ENCODE measurements at regions of chr12 and their contacts with region 1.

Region 1: DNA sequence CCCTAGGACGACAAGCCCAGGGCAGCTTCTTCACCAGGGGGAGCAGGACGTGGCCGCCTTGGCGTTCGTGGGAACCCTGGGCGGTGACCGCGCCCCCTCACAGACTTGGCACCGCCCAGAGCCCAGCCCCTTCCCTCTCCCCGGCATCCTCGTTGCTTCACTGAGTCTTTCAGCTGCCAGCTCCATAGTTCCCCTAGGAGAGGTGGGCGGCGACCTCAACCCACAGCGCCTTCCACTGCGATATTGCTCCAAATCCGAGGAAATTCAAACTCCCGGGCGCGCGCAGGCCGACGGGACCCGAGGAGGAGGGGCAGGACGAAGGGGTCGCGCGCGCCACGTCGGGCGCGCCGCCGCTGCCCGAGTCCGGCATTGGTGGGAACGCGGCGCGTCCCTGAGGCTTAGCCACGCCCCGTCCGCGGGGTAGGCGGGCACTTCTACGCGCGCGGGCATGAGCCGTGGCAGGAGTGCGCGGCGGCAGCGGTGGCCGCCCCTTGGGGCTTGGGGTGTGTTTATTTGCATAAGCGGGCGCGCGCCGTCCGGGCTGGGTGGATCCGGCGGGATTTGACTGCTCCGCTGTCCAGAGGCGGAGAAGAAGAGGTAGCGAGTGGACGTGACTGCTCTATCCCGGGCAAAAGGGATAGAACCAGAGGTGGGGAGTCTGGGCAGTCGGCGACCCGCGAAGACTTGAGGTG is at the starts of genes APAF1 and IKBIP:
- DNase-seq: peak; percentile 84 to 98
- H3K4me3 ChIP-seq: peak within 1 kb of the TSS; percentile 85
- H3K27ac ChIP-seq: peak within 1 kb of the TSS; percentile 29
- H3K4me1 ChIP-seq: peaks cover 7% of the 10 kb centered on the region; the same call in 1 of the 2 replicates
- H3K27me3 ChIP-seq: no peaks in the 10 kb centered on the region
- CTCF ChIP-seq: no peak
- total RNA-seq, gene APAF1: 12.8 and 19.1 TPM in 2 replicates
- total RNA-seq, gene IKBIP: 6.6 and 7.2 TPM in 2 replicates

Region 2: GRCh38 chr12:98379106-98379505 is 265.8 kb before region 1 on chr12:
- CTCF ChIA-PET with region 1: no interaction called
- POLR2A ChIA-PET with region 1: no interaction called
- intact Hi-C with region 1: no loop called
- DNase-seq: no peak
- H3K4me3 ChIP-seq: no peak overlapping the region
- H3K27ac ChIP-seq: no peak overlapping the region
- H3K4me1 ChIP-seq: no peaks in the 10 kb centered on the region
- H3K27me3 ChIP-seq: peaks cover 62% of the 10 kb centered on the region
- CTCF ChIP-seq: no peak

Region 3: GRCh38 chr12:98424726-98425401 is 220.0 kb before region 1 on chr12:
- CTCF ChIA-PET with region 1: no interaction called
- POLR2A ChIA-PET with region 1: no interaction called
- intact Hi-C with region 1: loop called (anchors 2 kb)
- DNase-seq: peak; percentile 83 to 91
- H3K4me3 ChIP-seq: no peak overlapping the region
- H3K27ac ChIP-seq: 0 out of 2 replicates have a peak overlapping the region, but pooled peaks have one; percentile 16
- H3K4me1 ChIP-seq: peaks cover 6% of the 10 kb centered on the region
- H3K27me3 ChIP-seq: no peaks in the 10 kb centered on the region
- CTCF ChIP-seq: peak; percentile 78

Region 4: DNA sequence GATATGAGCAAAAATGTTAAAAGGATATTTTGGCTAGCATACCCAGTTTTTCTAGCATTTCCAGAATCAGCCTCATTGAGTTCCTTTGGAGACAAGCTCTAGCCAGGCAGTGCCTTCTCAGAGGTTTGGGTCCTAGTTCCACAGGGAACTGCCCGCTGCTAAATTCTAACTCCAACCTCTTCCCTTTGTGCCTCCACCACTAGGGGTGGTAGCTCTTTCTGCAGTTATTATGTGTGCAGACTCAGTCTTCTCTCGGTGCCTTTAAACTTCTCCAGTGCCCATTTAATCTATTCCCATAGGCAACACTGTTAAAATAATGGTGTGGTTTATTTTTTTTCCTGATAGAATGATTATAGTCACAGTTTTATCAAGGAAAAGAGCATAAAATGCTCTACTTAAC is 72.8 kb before region 1 on chr12:
- CTCF ChIA-PET with region 1: no interaction called
- POLR2A ChIA-PET with region 1: no interaction called
- intact Hi-C with region 1: loop called (anchors 2 kb)
- DNase-seq: no peak
- H3K4me3 ChIP-seq: no peak overlapping the region
- H3K27ac ChIP-seq: no peak overlapping the region
- H3K4me1 ChIP-seq: no peaks in the 10 kb centered on the region; the same call in 1 of the 2 replicates
- H3K27me3 ChIP-seq: no peaks in the 10 kb centered on the region
- CTCF ChIP-seq: peak; percentile 33; the same call in 1 of the 2 replicates

Region 5: GRCh38 chr12:98593351-98594049 is 51.4 kb before region 1 on chr12 and contains the start of gene SLC25A3:
- CTCF ChIA-PET with region 1: interaction called, 4 read pairs
- POLR2A ChIA-PET with region 1: interaction called, 9 read pairs
- intact Hi-C with region 1: loop called (anchors 1 kb)
- DNase-seq: peak; percentile 91
- H3K4me3 ChIP-seq: peak within 1 kb of the TSS; percentile 95
- H3K27ac ChIP-seq: peak within 1 kb of the TSS; percentile 82
- H3K4me1 ChIP-seq: peaks cover 20% of the 10 kb centered on the region
- H3K27me3 ChIP-seq: no peaks in the 10 kb centered on the region
- CTCF ChIP-seq: no peak
- total RNA-seq, gene SLC25A3: 572 and 697 TPM in 2 replicates

Region 6: GRCh38 chr12:98754095-98754494 is 109.2 kb after region 1 on chr12:
- CTCF ChIA-PET with region 1: no interaction called
- POLR2A ChIA-PET with region 1: no interaction called
- intact Hi-C with region 1: no loop called
- DNase-seq: peak in 1 of 2 experiments; percentile 71
- H3K4me3 ChIP-seq: no peak overlapping the region
- H3K27ac ChIP-seq: no peak overlapping the region
- H3K4me1 ChIP-seq: no peaks in the 10 kb centered on the region
- H3K27me3 ChIP-seq: peaks cover 22% of the 10 kb centered on the region
- CTCF ChIP-seq: no peak